Calu3 (cell line): ENCODE measurements at regions of chr1 and their contacts with region 1.

Region 1: DNA sequence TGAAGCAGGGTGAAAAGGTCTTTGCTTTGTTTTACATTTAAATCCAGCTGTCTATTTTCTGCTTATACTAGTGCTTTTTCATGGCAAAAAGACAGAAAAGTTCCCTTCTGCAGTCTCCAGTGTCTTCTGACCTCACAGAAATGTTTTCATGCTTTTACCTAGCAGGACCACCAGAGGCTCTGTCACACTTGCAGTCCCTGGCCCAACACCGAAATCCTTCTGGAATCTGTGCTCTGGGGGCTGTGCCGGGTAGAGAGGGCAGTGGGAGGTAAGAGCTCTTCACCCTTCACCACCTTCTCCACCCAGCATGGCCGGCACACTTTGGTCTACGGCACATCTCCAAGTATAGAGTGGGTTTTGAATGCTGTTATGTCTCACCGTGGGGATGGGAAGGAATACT is 20.8 kb downstream of the GNAT2 start:
- DNase-seq: no peak
- H3K4me3 Mint-ChIP-seq: no peak overlapping the region
- H3K27ac Mint-ChIP-seq: no peak overlapping the region
- H3K4me1 Mint-ChIP-seq: peaks cover 11% of the 10 kb centered on the region
- H3K27me3 Mint-ChIP-seq: no peaks in the 10 kb centered on the region
- CTCF ChIP-seq: no peak

Region 2: DNA sequence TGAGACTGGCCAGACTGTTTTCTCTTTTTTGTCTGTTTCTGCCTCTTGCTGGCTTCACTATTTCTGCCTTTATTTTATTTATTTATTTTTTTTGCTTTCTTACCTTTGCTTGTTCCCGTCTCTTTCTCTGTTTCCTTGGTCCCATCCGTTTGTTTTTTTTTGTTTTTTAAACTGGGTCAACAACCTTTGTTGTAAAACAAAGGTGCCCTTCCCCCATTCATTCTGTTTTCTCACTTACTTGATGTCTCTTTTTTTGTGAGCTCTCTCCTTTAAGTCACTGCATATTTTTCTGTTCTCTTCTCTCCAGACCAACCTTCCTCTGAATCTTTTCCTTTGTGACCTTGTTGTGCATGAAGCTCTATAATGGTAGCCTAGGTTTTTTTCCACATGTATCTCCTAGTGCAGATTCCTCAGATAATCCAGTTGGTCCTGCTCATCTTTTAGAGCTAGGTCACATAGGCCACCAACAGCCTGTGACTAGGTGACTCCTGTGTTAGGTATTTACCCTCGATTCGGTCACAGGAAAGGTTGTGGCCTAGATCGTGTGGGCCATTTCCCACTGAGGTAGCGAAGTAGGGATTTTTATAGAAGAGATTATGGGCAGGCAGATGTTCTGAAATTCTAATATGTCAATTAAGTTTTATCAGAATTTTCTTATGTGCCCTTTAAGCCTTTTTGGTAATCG is 34.3 kb before region 1 on chr1:
- CTCF ChIA-PET with region 1: no interaction called
- intact Hi-C with region 1: loop called (anchors 5 kb)
- DNase-seq: no peak
- H3K4me3 Mint-ChIP-seq: no peak overlapping the region
- H3K27ac Mint-ChIP-seq: peak overlapping the region; percentile 57
- H3K4me1 Mint-ChIP-seq: peaks cover 43% of the 10 kb centered on the region
- H3K27me3 Mint-ChIP-seq: no peaks in the 10 kb centered on the region
- CTCF ChIP-seq: no peak

Region 3: GRCh38 chr1:110106013-110106941 is 507.6 kb after region 1 on chr1:
- CTCF ChIA-PET with region 1: no interaction called
- intact Hi-C with region 1: no loop called
- DNase-seq: peak; percentile 69
- H3K4me3 Mint-ChIP-seq: no peak overlapping the region
- H3K27ac Mint-ChIP-seq: no peak overlapping the region
- H3K4me1 Mint-ChIP-seq: no peaks in the 10 kb centered on the region
- H3K27me3 Mint-ChIP-seq: peaks cover 75% of the 10 kb centered on the region
- CTCF ChIP-seq: no peak